H1 (cell line): ENCODE measurements at regions of chr2 and their contacts with region 1.

Region 1: DNA sequence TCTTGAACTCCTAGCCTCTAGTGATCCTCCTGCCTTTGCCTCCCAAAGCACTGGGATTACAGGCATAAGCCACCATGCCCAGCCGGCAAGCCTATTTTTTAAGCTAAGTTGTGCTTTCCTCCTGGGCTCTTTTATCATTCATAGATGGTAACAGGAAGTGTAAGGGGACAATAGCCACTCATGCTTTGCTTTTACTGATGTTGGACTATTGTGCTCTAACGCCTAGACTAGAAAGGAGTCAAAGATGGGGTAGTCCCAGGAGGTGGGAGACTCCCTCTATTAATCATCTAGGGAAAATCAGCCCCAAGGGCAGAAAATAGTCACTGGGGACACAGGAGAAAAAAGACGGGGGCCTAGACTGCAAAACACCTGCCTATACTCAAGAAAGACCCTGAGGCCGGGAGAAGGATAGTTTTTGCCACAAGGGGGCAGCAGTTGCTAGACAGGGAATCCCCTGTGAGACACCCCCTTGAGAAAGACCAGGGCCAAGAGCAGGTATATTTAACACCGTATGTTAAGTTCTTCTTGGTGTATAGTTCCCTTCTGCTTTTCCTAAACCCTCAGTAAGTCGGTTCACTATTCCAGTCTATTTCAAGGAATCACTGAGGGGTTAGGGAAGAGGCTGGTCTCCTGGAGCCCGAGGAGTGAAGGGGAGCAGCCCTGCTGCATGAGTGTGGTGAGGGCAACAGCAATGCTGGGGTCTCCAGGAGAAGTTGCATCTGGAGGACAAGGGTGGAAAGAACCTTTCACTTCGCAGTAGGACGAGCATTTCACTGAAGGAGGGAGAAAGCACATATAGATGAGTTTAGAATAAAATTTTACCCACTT is 2.1 kb upstream of the CXCR1 start:
- DNase-seq: peak; percentile 33 to 92
- H3K4me3 ChIP-seq: no peak overlapping the region
- H3K27ac ChIP-seq: no peak overlapping the region
- H3K4me1 ChIP-seq: peaks cover 0 to 3% (median 0%) of the 10 kb centered on the region in 4 experiments; a peak in 1 of 7 replicates
- H3K27me3 ChIP-seq: 0 out of 7 replicates have a peak, but pooled peaks cover 0 to 3% (median 0%) of the 10 kb centered on the region in 4 experiments
- CTCF ChIP-seq: peak; percentile 58 to 80 (median 76)
- EP300 ChIP-seq: no peak
- POLR2A ChIP-seq: no peak
- RAD21 ChIP-seq: peak; percentile 51 to 68; a peak in 3 of 4 replicates

Region 2: GRCh38 chr2:218152765-218153164 is 16.1 kb before region 1 on chr2:
- CTCF ChIA-PET with region 1: interaction called, 21 read pairs
- POLR2A ChIA-PET with region 1: no interaction called
- DNase-seq: no peak
- H3K4me3 ChIP-seq: no peak overlapping the region
- H3K27ac ChIP-seq: no peak overlapping the region
- H3K4me1 ChIP-seq: no peaks in the 10 kb centered on the region; a peak in 2 of 7 replicates
- H3K27me3 ChIP-seq: no peaks in the 10 kb centered on the region
- CTCF ChIP-seq: no peak
- EP300 ChIP-seq: no peak
- POLR2A ChIP-seq: no peak
- RAD21 ChIP-seq: no peak

Region 3: DNA sequence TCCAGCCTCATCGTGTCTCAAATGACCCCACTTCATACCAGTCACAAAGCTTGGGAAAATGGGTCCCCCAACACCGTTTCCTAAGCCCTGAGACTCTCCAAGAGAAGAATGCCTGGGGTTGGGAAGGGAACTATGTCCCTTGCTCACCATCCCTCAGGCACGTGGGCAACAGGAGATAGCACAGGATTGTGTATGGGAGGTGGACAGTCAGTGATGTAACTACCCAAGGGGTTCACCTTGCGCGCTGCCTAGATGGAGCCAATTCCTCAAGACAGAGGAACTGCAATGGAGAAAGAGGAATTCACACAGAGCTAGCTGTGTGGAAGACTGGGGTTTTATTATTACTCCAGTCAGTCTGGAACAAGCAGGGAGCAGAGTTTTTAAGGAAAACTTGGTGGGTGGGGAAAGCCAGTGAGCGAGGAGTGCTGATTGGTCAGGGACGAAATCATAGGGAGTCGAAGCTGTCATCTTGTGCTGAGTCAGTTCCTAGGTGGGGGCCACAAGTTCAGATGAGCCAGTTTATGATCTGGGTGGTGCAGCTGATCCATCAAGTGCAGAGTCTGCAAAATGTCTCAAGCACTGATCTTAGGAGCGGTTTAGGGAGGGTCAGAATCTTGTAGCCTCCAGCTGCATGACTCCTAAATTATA is 11.7 kb after region 1 on chr2:
- CTCF ChIA-PET with region 1: interaction called, 25 read pairs
- POLR2A ChIA-PET with region 1: interaction called, 9 read pairs
- DNase-seq: no peak
- H3K4me3 ChIP-seq: no peak overlapping the region
- H3K27ac ChIP-seq: no peak overlapping the region
- H3K4me1 ChIP-seq: no peaks in the 10 kb centered on the region
- H3K27me3 ChIP-seq: no peaks in the 10 kb centered on the region
- CTCF ChIP-seq: no peak
- EP300 ChIP-seq: no peak
- POLR2A ChIP-seq: no peak
- RAD21 ChIP-seq: no peak

Region 4: GRCh38 chr2:218194880-218195279 is 26.0 kb after region 1 on chr2:
- CTCF ChIA-PET with region 1: no interaction called
- POLR2A ChIA-PET with region 1: no interaction called
- DNase-seq: no peak
- H3K4me3 ChIP-seq: no peak overlapping the region
- H3K27ac ChIP-seq: no peak overlapping the region
- H3K4me1 ChIP-seq: peaks cover 0 to 8% (median 1%) of the 10 kb centered on the region in 4 experiments; a peak in 2 of 7 replicates
- H3K27me3 ChIP-seq: no peaks in the 10 kb centered on the region
- CTCF ChIP-seq: no peak
- EP300 ChIP-seq: no peak
- POLR2A ChIP-seq: no peak
- RAD21 ChIP-seq: no peak